ENCODE measurements at regions of chr9 and their contacts with region 1.

Region 1: DNA sequence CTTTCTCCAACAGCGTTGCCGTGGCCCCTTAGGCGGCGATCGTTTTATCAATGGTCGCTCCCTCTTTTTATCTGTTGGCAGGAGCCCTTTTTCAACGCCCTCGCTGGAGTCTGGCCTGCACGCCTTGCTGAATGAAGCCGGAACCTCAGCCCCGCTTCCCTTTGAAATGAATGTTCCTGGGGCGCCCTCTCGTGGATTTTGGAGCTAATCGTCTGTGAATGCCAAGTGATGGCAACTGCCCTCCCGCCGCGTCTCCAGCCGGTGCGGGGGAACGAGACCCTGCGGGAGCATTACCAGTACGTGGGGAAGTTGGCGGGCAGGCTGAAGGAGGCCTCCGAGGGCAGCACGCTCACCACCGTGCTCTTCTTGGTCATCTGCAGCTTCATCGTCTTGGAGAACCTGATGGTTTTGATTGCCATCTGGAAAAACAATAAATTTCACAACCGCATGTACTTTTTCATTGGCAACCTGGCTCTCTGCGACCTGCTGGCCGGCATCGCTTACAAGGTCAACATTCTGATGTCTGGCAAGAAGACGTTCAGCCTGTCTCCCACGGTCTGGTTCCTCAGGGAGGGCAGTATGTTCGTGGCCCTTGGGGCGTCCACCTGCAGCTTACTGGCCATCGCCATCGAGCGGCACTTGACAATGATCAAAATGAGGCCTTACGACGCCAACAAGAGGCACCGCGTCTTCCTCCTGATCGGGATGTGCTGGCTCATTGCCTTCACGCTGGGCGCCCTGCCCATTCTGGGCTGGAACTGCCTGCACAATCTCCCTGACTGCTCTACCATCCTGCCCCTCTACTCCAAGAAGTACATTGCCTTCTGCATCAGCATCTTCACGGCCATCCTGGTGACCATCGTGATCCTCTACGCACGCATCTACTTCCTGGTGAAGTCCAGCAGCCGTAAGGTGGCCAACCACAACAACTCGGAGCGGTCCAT is 10.0 kb downstream of the S1PR3 start:
- DNase-seq: peak; percentile 81
- ATAC-seq: peak; percentile 85
- H3K4me3 ChIP-seq: no peak overlapping the region
- H3K27ac ChIP-seq: peak overlapping the region; percentile 30; the same call in 1 of the 2 replicates
- H3K4me1 ChIP-seq: peaks cover 16% of the 10 kb centered on the region
- H3K27me3 ChIP-seq: no peaks in the 10 kb centered on the region
- CTCF ChIP-seq: peak; percentile 91
- POLR2A ChIP-seq: peak; percentile 49; the same call in 1 of the 2 replicates
- RAD21 ChIP-seq: peak; percentile 93

Region 2: GRCh38 chr9:87678650-87679515 is 1322.4 kb before region 1 on chr9:
- CTCF ChIA-PET with region 1: no interaction called
- POLR2A ChIA-PET with region 1: no interaction called
- dilution Hi-C with region 1: no loop called
- in situ Hi-C with region 1: loop called (anchors 25 kb)
- intact Hi-C with region 1: no loop called
- DNase-seq: peak; percentile 74
- ATAC-seq: peak; percentile 88
- H3K4me3 ChIP-seq: no peak overlapping the region
- H3K27ac ChIP-seq: no peak overlapping the region
- H3K4me1 ChIP-seq: no peaks in the 10 kb centered on the region
- H3K27me3 ChIP-seq: peaks cover 2% of the 10 kb centered on the region; the same call in 1 of the 2 replicates
- CTCF ChIP-seq: peak; percentile 91
- POLR2A ChIP-seq: no peak
- RAD21 ChIP-seq: peak; percentile 89

Region 3: DNA sequence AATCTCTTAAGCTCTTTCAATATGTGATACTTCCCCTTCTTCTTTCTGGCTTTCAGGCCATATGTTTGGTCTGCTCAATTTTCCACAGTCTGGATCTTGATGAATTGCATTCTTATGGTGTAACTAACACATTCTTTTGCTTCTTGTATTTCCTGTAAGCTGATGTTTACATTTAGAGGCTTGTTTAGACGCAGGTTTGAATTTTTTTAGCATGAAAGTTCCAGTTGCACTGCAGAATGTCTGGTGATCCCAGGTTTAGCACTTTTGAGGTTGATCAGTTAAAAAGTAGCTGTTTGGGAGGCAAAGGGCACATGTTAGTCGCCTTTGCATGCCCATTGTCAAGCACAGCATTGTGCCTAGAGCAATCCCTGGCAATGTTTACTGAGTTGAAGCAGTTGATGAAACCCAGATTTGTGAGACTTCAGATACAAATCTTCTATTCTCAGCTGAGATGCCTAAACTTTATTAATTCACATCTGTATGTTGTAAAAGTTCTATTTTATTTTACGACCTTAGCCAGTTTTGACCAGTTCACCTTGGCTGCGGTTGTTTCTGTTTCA is 803.4 kb before region 1 on chr9:
- CTCF ChIA-PET with region 1: no interaction called
- POLR2A ChIA-PET with region 1: no interaction called
- dilution Hi-C with region 1: no loop called
- in situ Hi-C with region 1: loop called (anchors 10 kb)
- intact Hi-C with region 1: no loop called
- DNase-seq: peak; percentile 87
- ATAC-seq: peak; percentile 76
- H3K4me3 ChIP-seq: peak overlapping the region; percentile 42; the same call in 1 of the 2 replicates
- H3K27ac ChIP-seq: peak overlapping the region; percentile 78
- H3K4me1 ChIP-seq: peaks cover 4% of the 10 kb centered on the region
- H3K27me3 ChIP-seq: no peaks in the 10 kb centered on the region
- CTCF ChIP-seq: no peak
- POLR2A ChIP-seq: no peak
- RAD21 ChIP-seq: no peak

Region 4: GRCh38 chr9:88593537-88594185 is 407.6 kb before region 1 on chr9:
- CTCF ChIA-PET with region 1: no interaction called
- POLR2A ChIA-PET with region 1: no interaction called
- dilution Hi-C with region 1: no loop called
- in situ Hi-C with region 1: loop called (anchors 5 kb)
- intact Hi-C with region 1: loop called (anchors 1 kb)
- DNase-seq: peak; percentile 74
- ATAC-seq: peak; percentile 90
- H3K4me3 ChIP-seq: no peak overlapping the region
- H3K27ac ChIP-seq: no peak overlapping the region
- H3K4me1 ChIP-seq: no peaks in the 10 kb centered on the region
- H3K27me3 ChIP-seq: no peaks in the 10 kb centered on the region
- CTCF ChIP-seq: peak; percentile 83
- POLR2A ChIP-seq: no peak
- RAD21 ChIP-seq: peak; percentile 87

Region 5: DNA sequence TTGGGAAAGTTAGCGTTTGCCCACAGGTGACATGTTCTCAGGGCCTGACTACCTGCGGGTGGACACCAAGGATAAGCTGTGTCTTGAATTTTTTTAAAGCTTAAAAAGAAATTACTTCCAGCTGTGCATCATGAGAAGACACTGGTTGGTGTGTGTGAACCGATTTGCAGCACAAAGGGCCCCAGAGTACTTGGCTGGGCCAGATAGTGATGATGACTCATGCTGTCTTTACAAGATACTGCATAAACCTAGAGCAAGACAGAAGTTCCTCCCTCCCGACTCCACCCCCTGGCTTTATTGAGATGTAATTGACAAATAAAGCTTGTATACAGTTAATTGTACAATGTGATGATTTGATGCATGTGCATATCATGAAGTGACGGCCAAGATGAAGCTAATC is 253.5 kb before region 1 on chr9:
- CTCF ChIA-PET with region 1: no interaction called
- POLR2A ChIA-PET with region 1: no interaction called
- dilution Hi-C with region 1: no loop called
- in situ Hi-C with region 1: no loop called
- intact Hi-C with region 1: loop called (anchors 1 kb)
- DNase-seq: peak; percentile 96
- ATAC-seq: peak; percentile 50
- H3K4me3 ChIP-seq: no peak overlapping the region
- H3K27ac ChIP-seq: peak overlapping the region; percentile 93
- H3K4me1 ChIP-seq: peaks cover 35% of the 10 kb centered on the region
- H3K27me3 ChIP-seq: no peaks in the 10 kb centered on the region
- CTCF ChIP-seq: no peak
- POLR2A ChIP-seq: no peak
- RAD21 ChIP-seq: peak; percentile 10; the same call in 1 of the 2 replicates

Region 6: DNA sequence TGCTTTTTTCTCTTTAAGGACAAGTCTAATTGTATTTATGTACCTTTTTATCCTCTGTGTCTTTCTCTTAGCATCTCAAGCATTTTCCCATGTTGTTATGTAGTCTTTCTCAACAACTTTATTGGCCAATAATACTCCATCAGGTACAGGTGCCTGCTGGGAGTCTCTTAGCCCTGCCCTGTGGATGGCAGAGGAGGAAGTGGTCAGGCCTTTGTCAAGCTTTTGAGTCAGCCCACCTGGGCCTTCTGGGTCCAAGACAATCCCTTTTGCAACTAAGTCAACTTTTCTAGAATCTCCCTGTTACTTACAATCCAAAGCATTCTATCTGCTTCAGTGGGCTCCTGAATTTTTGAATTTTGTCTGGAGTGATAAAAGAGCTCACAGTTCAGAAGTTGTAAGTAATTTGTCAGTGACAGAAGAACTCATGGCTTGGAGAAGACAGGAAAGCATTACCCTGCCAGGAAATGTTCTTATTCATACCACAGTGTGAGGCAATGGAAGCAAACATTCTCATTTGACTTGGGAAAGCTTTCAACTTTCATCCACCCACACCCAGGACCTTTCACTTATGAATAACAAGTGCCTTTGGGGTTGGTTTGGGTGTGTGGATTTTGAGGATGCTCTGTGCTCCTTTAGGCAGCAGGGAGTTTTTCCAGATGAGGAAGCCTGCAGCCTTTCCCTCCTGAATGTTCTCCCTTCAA is 210.0 kb before region 1 on chr9:
- CTCF ChIA-PET with region 1: no interaction called
- POLR2A ChIA-PET with region 1: no interaction called
- dilution Hi-C with region 1: no loop called
- in situ Hi-C with region 1: no loop called
- intact Hi-C with region 1: no loop called
- DNase-seq: peak; percentile 92
- ATAC-seq: peak; percentile 90
- H3K4me3 ChIP-seq: no peak overlapping the region
- H3K27ac ChIP-seq: peak overlapping the region; percentile 34; the same call in 1 of the 2 replicates
- H3K4me1 ChIP-seq: peaks cover 6% of the 10 kb centered on the region
- H3K27me3 ChIP-seq: no peaks in the 10 kb centered on the region
- CTCF ChIP-seq: no peak
- POLR2A ChIP-seq: no peak
- RAD21 ChIP-seq: peak; percentile 15; the same call in 1 of the 2 replicates

Measured in IMR-90 (cell line).